ENCODE measurements at regions of chr19 and their contacts with region 1.

Region 1: DNA sequence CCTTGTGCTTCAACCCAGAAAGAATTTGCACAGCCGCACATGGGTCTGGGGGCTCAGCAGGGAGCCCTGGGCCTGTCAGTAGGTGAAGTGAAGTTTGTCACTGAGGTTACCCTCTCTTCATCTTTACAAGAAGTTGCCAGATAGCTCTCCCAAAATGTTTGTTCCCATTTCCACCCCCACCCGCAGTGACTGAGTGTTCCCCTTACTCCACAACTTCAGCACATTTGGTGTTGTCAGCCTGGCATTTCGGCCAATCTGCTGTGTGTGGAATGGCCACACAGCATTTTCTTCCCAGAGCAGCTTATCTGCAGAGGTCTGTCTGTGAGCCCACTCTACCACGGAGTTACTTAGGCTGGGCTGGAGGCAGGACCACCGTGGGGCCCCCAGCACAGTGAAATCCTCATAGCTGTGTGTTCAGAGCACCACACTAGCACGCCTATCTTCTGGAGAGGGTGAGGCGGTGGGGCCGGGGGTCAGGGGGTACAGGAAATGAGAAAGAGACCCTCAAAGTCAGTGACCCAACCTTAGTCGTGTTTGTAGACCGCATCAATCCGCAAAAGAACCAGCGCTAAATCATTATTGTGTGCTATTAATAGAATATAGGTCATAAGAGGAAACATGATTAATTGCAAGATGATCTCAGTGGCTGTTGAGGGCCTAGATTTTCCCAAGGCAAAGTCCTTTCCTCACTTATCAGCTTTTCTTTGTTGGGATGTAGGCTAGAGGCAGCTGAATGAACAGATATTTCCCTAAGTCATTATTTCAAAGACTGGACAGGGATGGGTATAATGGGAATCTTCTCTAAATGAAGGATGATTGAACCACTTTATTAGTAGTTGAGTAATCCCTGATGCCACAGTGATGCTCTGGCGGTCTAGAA is 116.0 kb downstream of the SIPA1L3 start:
- DNase-seq: no peak
- H3K4me3 ChIP-seq: no peak overlapping the region
- H3K27ac ChIP-seq: peak overlapping the region; percentile 62 to 68
- H3K4me1 ChIP-seq: no peaks in the 10 kb centered on the region
- H3K27me3 ChIP-seq: no peaks in the 10 kb centered on the region
- CTCF ChIP-seq: no peak
- POLR2A ChIP-seq: no peak

Region 2: DNA sequence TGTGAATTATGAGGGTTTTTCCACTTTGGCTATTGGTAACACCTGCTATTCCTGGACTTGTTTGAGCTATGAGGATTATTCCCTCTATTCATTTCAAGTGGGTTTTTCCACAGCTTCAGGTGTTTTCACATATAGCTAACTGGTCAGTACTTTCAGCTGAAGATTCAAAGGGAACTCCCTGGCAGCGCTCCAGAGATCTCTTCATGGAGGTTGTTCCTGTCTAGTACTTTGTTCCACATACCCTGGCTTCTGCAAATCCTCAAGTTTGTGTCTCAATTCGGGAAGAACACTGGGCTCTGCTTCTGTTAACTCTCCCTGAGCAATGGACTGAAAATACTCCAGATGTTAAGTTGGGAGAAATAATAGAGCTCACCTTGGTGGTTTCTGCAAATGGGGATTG is 297.9 kb before region 1 on chr19:
- intact Hi-C with region 1: no loop called
- DNase-seq: no peak
- H3K4me3 ChIP-seq: no peak overlapping the region
- H3K27ac ChIP-seq: no peak overlapping the region
- H3K4me1 ChIP-seq: no peaks in the 10 kb centered on the region
- H3K27me3 ChIP-seq: no peaks in the 10 kb centered on the region
- CTCF ChIP-seq: no peak
- POLR2A ChIP-seq: no peak

Region 3: GRCh38 chr19:37906869-37907734 is 115.9 kb before region 1 on chr19 and contains the start of gene SIPA1L3:
- intact Hi-C with region 1: no loop called
- DNase-seq: peak; percentile 92 to 96
- H3K4me3 ChIP-seq: peak within 1 kb of the TSS; percentile 67 to 97 (median 93)
- H3K27ac ChIP-seq: peak within 1 kb of the TSS; percentile 63 to 75
- H3K4me1 ChIP-seq: peaks cover 0 to 8% of the 10 kb centered on the region in 2 donors
- H3K27me3 ChIP-seq: no peaks in the 10 kb centered on the region
- CTCF ChIP-seq: no peak
- POLR2A ChIP-seq: no peak
- total RNA-seq, gene SIPA1L3: 9.6 to 29.8 (median 28.5) TPM

Region 4: GRCh38 chr19:38057959-38058710 is 35.1 kb after region 1 on chr19:
- intact Hi-C with region 1: loop called (anchors 5 kb)
- DNase-seq: peak; percentile 46 to 77
- H3K4me3 ChIP-seq: no peak overlapping the region
- H3K27ac ChIP-seq: peak overlapping the region; percentile 86 to 89
- H3K4me1 ChIP-seq: peaks cover 0 to 11% of the 10 kb centered on the region in 2 donors
- H3K27me3 ChIP-seq: no peaks in the 10 kb centered on the region
- CTCF ChIP-seq: no peak
- POLR2A ChIP-seq: no peak

Region 5: GRCh38 chr19:38122402-38123093 is 99.5 kb after region 1 on chr19:
- intact Hi-C with region 1: no loop called
- DNase-seq: no peak
- H3K4me3 ChIP-seq: no peak overlapping the region
- H3K27ac ChIP-seq: no peak overlapping the region
- H3K4me1 ChIP-seq: no peaks in the 10 kb centered on the region
- H3K27me3 ChIP-seq: no peaks in the 10 kb centered on the region
- CTCF ChIP-seq: no peak
- POLR2A ChIP-seq: no peak